Adrenal gland (tissue), 19 donors: ENCODE measurements at regions of chr9 and their contacts with region 1.

Region 1: GRCh38 chr9:83219152-83219923 is 156.4 kb upstream of the RASEF start:
- DNase-seq: peak; percentile 83 to 92 (median 86)
- H3K4me3 ChIP-seq: peak overlapping the region; percentile 16 to 60 (median 40)
- H3K27ac ChIP-seq: peak overlapping the region; percentile 73 to 88 (median 81)
- H3K4me1 ChIP-seq: peaks cover 13 to 17% of the 10 kb centered on the region in 2 donors
- H3K27me3 ChIP-seq: no peaks in the 10 kb centered on the region
- CTCF ChIP-seq: peak in 3 of 6 experiments; percentile 12 to 61 (median 23)
- POLR2A ChIP-seq: peak in 1 of 2 donors; percentile 67

Region 2: DNA sequence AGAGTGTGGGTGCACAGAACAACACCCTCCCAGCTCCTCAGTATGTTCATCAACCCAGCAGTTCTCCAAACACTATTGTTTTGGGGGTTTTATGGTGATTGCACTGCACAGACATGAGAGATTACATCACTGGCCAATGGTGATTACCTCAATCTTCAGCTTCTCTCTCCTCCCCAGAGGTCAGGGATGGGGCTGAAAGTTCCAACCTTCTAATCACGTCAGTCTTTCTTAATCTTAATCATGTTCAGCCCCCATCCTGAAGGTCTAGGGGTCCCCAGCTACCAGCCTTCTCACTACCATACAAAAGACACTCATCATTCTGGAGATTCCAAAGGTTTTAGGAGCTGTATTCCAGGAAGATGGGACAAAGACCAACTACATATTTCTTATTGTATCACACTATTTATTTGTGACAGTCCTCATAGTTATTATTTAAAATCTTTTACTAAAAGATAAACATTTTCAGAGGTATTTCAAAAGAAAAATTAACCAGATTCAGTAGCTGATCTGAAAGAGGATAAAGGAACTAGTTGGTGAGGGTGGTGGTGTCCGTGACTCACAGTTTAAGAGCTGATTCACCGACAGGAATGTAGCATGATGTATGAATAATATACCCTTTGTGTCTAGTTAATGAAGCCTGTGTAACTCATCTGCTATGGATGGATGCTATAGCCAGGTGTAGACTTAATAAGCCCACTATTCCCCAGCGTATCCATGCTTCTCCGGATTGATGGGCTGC is 192.0 kb before region 1 on chr9:
- intact Hi-C with region 1: no loop called
- DNase-seq: no peak
- H3K4me3 ChIP-seq: no peak overlapping the region
- H3K27ac ChIP-seq: no peak overlapping the region
- H3K4me1 ChIP-seq: no peaks in the 10 kb centered on the region
- H3K27me3 ChIP-seq: no peaks in the 10 kb centered on the region
- CTCF ChIP-seq: no peak
- POLR2A ChIP-seq: no peak

Region 3: GRCh38 chr9:83327323-83327722 is 108.0 kb after region 1 on chr9:
- intact Hi-C with region 1: loop called in 1 of 2 experiments (anchors 10 kb)
- DNase-seq: peak in 3 of 7 donors; percentile 17 to 31 (median 19)
- H3K4me3 ChIP-seq: no peak overlapping the region
- H3K27ac ChIP-seq: peak overlapping the region in 3 of 5 donors; percentile 4 to 70 (median 40)
- H3K4me1 ChIP-seq: peaks cover 8 to 19% of the 10 kb centered on the region in 2 donors
- H3K27me3 ChIP-seq: no peaks in the 10 kb centered on the region
- CTCF ChIP-seq: no peak
- POLR2A ChIP-seq: no peak

Region 4: DNA sequence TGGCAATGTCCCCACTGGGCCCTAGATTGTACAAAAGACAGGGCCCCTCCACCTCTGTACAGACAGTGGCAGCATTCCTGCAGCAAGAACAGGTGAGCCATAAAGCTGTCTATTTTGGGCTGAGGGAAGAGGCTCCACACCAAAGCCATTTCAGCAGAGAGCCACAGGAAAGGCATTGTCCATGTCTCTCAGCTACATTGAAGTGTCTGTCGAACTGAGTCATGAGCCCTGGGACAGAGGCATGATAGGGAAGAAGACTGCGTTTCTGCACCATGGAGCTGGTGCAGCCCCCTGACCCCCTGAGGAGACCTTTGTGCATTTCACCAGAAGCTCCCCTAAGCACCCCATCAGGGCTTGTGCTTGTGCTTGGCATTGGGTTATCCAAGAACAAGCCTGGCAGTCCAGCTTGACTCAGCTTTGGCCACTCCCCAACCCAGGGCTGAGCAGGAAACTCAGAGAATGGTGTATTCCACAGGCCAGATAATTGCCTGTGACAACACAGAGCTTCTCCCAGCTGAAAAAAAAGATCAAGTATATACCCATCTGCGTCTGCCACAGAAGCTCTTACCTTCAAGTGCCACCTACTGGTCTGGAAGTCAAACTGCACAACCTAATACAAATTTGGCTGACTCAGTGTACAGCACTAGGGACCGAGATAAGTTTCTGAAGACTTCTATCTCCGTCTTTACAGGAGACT is 324.8 kb after region 1 on chr9:
- intact Hi-C with region 1: loop called in 1 of 2 experiments (anchors 5 kb)
- DNase-seq: peak; percentile 51 to 88 (median 83)
- H3K4me3 ChIP-seq: no peak overlapping the region
- H3K27ac ChIP-seq: peak overlapping the region in 1 of 5 donors; percentile 5
- H3K4me1 ChIP-seq: peaks cover 0 to under 1% of the 10 kb centered on the region in 2 donors
- H3K27me3 ChIP-seq: no peaks in the 10 kb centered on the region
- CTCF ChIP-seq: peak; percentile 65 to 88 (median 82)
- POLR2A ChIP-seq: no peak